Colonic mucosa (tissue), 4 donors: ENCODE measurements at regions of chr7 and their contacts with region 1.

Region 1: GRCh38 chr7:116173051-116174028 is 37.0 kb upstream of the TES start:
- DNase-seq: no peak
- H3K4me3 ChIP-seq: no peak overlapping the region
- H3K27ac ChIP-seq: no peak overlapping the region
- H3K4me1 ChIP-seq: no peaks in the 10 kb centered on the region
- H3K27me3 ChIP-seq: no peaks in the 10 kb centered on the region
- CTCF ChIP-seq: peak; percentile 54

Region 2: DNA sequence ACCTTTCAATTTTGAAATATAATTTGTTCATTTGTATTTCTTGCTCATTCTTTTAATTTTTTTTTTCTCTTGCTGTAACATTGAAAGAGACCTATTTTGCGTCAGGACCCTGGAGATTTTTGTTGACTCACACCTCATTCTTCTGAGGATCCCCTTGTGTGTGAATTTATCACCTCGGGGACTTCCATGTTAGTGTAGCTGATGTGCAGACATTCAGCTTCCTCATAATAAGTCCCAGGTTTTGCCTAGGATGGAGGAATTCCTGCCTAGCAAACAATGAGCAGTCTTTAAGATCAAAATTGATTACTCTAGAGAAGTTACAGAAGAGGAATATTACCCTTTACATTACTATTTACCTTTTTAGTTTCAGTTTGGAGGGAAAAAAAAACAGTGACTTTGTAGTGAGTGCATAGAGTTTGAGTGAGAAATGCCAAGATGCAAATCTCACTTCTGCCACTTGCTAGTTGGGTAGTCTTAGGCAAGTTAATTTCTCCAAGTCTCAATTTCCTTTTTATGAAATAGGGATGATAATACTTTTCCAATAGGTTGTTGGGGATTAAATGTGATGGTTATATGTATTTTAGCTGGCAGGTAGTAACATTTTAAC is 51.3 kb after region 1 on chr7:
- intact Hi-C with region 1: no loop called
- DNase-seq: no peak
- H3K4me3 ChIP-seq: no peak overlapping the region
- H3K27ac ChIP-seq: no peak overlapping the region
- H3K4me1 ChIP-seq: no peaks in the 10 kb centered on the region
- H3K27me3 ChIP-seq: no peaks in the 10 kb centered on the region
- CTCF ChIP-seq: no peak

Region 3: GRCh38 chr7:116290740-116291139 is 117.4 kb after region 1 on chr7:
- intact Hi-C with region 1: no loop called
- DNase-seq: no peak
- H3K4me3 ChIP-seq: no peak overlapping the region
- H3K27ac ChIP-seq: no peak overlapping the region
- H3K4me1 ChIP-seq: no peaks in the 10 kb centered on the region
- H3K27me3 ChIP-seq: no peaks in the 10 kb centered on the region
- CTCF ChIP-seq: no peak

Region 4: GRCh38 chr7:116809636-116810266 is 636.4 kb after region 1 on chr7:
- intact Hi-C with region 1: loop called (anchors 10 kb)
- DNase-seq: peak; percentile 66
- H3K4me3 ChIP-seq: no peak overlapping the region
- H3K27ac ChIP-seq: peak overlapping the region; percentile 67
- H3K4me1 ChIP-seq: peaks cover 10% of the 10 kb centered on the region
- H3K27me3 ChIP-seq: no peaks in the 10 kb centered on the region
- CTCF ChIP-seq: peak; percentile 54

Region 5: DNA sequence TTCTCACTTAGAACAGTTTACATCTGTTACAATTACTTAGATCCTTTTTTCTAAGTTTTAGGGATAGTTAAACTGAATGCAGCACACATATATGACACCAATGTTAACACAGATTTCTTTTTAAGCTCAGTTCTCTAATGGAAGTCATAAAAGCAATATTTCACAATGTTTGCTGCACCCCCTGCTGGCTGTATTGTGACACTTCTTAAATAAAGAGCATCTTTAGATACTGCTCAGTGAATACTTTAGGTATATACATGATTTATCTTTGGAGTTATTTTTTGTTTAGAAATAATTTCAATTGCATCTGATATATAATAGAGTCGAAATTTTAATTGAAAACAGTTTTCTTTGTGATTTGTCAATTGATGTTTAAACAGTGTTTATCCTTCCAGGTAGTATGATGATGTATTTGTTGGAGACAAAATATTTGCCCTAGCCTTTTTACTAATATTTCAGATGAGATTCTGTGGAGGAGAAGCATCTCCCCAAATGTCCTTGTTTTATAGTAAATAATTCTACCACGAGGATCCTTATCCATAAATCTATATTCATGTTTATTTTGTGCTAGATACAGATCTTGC is 954.3 kb after region 1 on chr7:
- intact Hi-C with region 1: loop called (anchors 10 kb)
- DNase-seq: peak; percentile 60
- H3K4me3 ChIP-seq: no peak overlapping the region
- H3K27ac ChIP-seq: no peak overlapping the region
- H3K4me1 ChIP-seq: peaks cover 6% of the 10 kb centered on the region
- H3K27me3 ChIP-seq: no peaks in the 10 kb centered on the region
- CTCF ChIP-seq: peak; percentile 74